ENCODE measurements at regions of chr19 and their contacts with region 1.

Region 1: GRCh38 chr19:51986309-51987291 is at the start of gene ZNF350:
- DNase-seq: peak; percentile 72
- ATAC-seq: peak; percentile 98
- H3K4me3 Mint-ChIP-seq: peak within 1 kb of the TSS; percentile 97
- H3K27ac Mint-ChIP-seq: peak within 1 kb of the TSS; percentile 93
- H3K4me1 Mint-ChIP-seq: peaks cover 20% of the 10 kb centered on the region
- H3K27me3 Mint-ChIP-seq: no peaks in the 10 kb centered on the region
- CTCF ChIP-seq: no peak
- total RNA-seq, gene ZNF350: 32.2 and 35.2 TPM in 2 replicates

Region 2: GRCh38 chr19:51904331-51905165 is 82.1 kb before region 1 on chr19 and contains the start of gene ZNF649:
- CTCF ChIA-PET with region 1: no interaction called
- POLR2A ChIA-PET with region 1: no interaction called
- intact Hi-C with region 1: loop called (anchors 1 kb)
- DNase-seq: peak; percentile 68
- ATAC-seq: peak; percentile 95
- H3K4me3 Mint-ChIP-seq: peak within 1 kb of the TSS; percentile 99
- H3K27ac Mint-ChIP-seq: peak within 1 kb of the TSS; percentile 98
- H3K4me1 Mint-ChIP-seq: peaks cover 24% of the 10 kb centered on the region
- H3K27me3 Mint-ChIP-seq: peaks cover 15% of the 10 kb centered on the region
- CTCF ChIP-seq: no peak
- total RNA-seq, gene ZNF649: 21.9 and 27.4 TPM in 2 replicates

Region 3: DNA sequence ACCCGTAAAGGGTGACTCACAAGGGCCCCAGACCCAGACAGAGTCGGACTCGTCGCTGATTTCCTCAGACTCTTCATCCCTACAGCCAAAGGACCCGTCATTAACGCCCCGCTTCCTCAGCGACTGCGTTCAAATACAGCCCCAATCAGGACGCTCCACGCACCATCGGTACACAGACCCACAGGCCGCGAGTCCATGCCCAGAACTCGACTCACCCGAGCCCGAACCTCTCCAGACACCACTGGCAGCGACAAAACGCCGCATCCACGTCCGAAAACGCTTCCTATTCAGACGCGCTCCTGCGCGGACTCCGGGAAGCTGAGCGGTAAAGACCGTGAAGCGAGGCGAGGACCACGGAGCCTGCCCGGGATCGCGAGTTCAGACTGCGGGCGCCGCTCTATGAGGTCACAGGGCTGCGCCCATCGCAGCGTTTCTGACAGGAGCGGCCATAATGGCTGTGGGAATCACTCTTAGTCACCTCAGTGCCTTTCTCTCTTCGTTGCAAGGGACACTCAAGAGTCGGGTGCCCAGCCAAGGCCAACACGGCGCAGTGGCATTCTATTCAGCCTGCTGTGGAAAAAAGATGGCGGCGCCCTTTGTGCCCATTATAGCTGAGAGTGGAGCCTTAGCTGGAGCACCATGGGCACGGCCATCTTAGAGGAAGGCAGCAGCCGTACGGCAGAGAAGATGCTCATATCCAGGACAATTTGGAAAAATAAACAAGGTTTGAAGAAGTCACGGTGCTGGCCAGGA is 41.6 kb after region 1 on chr19 and contains the start of gene ZNF614:
- CTCF ChIA-PET with region 1: no interaction called
- POLR2A ChIA-PET with region 1: no interaction called
- intact Hi-C with region 1: loop called (anchors 1 kb)
- DNase-seq: peak; percentile 86
- ATAC-seq: peak; percentile 89
- H3K4me3 Mint-ChIP-seq: peak within 1 kb of the TSS; percentile 98
- H3K27ac Mint-ChIP-seq: peak within 1 kb of the TSS; percentile 93
- H3K4me1 Mint-ChIP-seq: peaks cover 29% of the 10 kb centered on the region
- H3K27me3 Mint-ChIP-seq: no peaks in the 10 kb centered on the region
- CTCF ChIP-seq: no peak
- total RNA-seq, gene ZNF614: 14.0 and 14.3 TPM in 2 replicates

Region 4: DNA sequence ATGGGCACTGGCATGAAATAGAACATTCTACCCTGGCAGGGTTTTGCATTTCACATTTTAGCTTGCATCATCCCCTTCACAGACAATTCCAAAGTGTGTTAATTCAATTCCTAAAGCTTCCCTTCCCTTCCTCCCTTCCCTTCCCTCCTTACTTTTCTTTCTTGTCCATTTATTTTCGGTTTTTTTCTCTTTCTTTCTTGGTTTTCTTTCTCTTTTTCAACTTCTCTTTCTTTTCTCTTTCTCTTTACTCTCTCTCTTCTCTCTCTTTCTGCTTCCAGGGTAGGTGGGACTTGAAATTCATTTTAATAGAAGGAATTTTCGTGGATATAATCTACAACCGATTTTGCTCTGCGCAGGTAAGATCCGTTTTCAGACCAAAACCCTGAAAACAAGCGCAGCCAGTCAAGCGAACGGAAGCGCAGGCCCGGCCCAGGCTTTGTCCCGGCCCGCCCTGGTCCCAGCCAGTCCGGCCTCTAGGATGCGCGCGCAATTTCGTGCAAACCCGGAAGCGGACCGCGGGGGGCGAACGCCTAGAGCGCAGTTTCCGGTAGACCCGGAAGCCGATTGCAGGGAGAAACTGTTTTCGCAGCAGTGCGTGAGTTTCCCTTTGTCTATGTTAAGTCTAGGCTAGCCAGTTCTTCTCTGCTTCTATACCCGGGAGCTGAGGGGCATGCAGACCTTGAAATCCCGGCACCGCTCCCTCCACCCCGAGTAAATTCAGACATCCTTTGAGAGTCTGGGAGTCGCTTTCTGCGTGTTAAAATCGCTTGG is 410.9 kb after region 1 on chr19 and contains the start of gene ZNF528:
- CTCF ChIA-PET with region 1: no interaction called
- POLR2A ChIA-PET with region 1: no interaction called
- intact Hi-C with region 1: loop called (anchors 10 kb)
- DNase-seq: peak; percentile 91
- ATAC-seq: peak; percentile 99
- H3K4me3 Mint-ChIP-seq: peak within 1 kb of the TSS; percentile 90
- H3K27ac Mint-ChIP-seq: peak within 1 kb of the TSS; percentile 91
- H3K4me1 Mint-ChIP-seq: peaks cover 18% of the 10 kb centered on the region
- H3K27me3 Mint-ChIP-seq: no peaks in the 10 kb centered on the region
- CTCF ChIP-seq: no peak
- total RNA-seq, gene ZNF528: 29.8 and 40.3 TPM in 2 replicates

Measured in activated B cell treated with CpG ODN at 0.5 μM for 24 hours (primary cell).